CD4-positive, alpha-beta T cell (primary cell): ENCODE measurements at regions of chr12 and their contacts with region 1.

Region 1: GRCh38 chr12:57111031-57111734 is at the start of gene STAT6:
- DNase-seq: peak; percentile 69 to 96 (median 80)
- ATAC-seq: peak; percentile 64
- H3K4me3 ChIP-seq: peak within 1 kb of the TSS; percentile 95
- H3K4me3 Mint-ChIP-seq: peak within 1 kb of the TSS; percentile 96
- H3K27ac ChIP-seq: peak within 1 kb of the TSS; percentile 100
- H3K27ac Mint-ChIP-seq: peak within 1 kb of the TSS; percentile 94
- H3K4me1 ChIP-seq: peaks cover 57% of the 10 kb centered on the region
- H3K4me1 Mint-ChIP-seq: peaks cover 53% of the 10 kb centered on the region
- H3K27me3 ChIP-seq: no peaks in the 10 kb centered on the region
- H3K27me3 Mint-ChIP-seq: peaks cover 4% of the 10 kb centered on the region
- CTCF ChIP-seq: no peak
- total RNA-seq, gene STAT6: 133 to 144 TPM

Region 2: GRCh38 chr12:56636675-56637540 is 474.3 kb before region 1 on chr12:
- CTCF ChIA-PET with region 1: interaction called, 3 read pairs
- POLR2A ChIA-PET with region 1: interaction called, 15 read pairs
- intact Hi-C with region 1: no loop called
- DNase-seq: peak; percentile 87 to 98 (median 93)
- ATAC-seq: peak; percentile 72
- H3K4me3 ChIP-seq: peak overlapping the region; percentile 76
- H3K4me3 Mint-ChIP-seq: peak overlapping the region; percentile 94
- H3K27ac ChIP-seq: peak overlapping the region; percentile 56 to 84
- H3K27ac Mint-ChIP-seq: peak overlapping the region; percentile 98
- H3K4me1 ChIP-seq: peaks cover 56% of the 10 kb centered on the region
- H3K4me1 Mint-ChIP-seq: peaks cover 65% of the 10 kb centered on the region
- H3K27me3 ChIP-seq: no peaks in the 10 kb centered on the region
- H3K27me3 Mint-ChIP-seq: no peaks in the 10 kb centered on the region
- CTCF ChIP-seq: peak; percentile 72

Region 3: DNA sequence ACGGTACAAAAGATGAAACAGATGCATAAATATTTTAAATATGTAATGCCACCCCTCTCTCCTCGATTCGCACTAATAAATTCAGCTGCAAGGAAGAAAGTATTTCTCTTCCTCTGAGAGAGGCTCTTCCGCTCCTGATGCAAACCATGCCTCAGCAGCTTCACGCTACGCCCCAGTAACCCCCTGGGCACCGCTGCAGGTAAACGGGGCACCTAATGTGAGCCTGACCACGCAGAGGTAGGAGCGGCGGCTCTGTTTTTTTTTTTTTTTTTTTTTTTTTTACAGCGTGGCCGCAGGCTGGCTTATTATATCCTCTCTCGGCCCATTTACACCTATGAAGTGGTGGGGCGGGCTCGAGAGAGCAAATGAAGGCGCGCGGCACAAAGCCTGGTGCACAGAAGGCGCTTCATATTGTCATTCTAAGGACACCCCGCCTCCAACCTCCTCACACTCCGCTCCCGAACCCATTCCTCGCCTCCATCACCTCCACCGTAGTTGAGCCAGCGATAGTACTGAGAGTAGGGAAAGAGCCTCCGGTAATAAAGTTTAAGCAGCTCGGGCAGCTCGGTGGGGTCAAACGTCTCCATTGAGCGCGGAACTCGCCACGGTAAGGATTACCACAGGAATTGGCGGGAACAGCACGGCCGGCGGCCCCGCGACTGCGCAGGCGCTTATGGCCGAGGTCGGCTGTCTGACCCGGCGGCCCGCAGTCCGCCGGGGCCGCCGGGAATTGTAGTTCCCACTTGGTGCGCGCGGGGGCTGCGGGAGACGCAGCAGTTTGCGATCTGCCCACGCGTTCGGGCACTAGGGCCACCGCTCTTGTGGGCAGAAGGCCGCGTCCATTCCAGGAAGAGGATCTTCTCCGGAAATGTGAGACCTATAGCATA is 359.2 kb before region 1 on chr12 and contains the start of gene PRIM1:
- CTCF ChIA-PET with region 1: interaction called, 14 read pairs
- POLR2A ChIA-PET with region 1: interaction called, 10 read pairs
- intact Hi-C with region 1: loop called in 1 of 2 experiments (anchors 1 kb)
- DNase-seq: peak; percentile 66 to 91 (median 78)
- ATAC-seq: peak; percentile 80
- H3K4me3 ChIP-seq: peak within 1 kb of the TSS; percentile 96
- H3K4me3 Mint-ChIP-seq: peak within 1 kb of the TSS; percentile 98
- H3K27ac ChIP-seq: peak within 1 kb of the TSS; percentile 68 to 80
- H3K27ac Mint-ChIP-seq: peak within 1 kb of the TSS; percentile 95
- H3K4me1 ChIP-seq: peaks cover 10% of the 10 kb centered on the region
- H3K4me1 Mint-ChIP-seq: peaks cover 33% of the 10 kb centered on the region
- H3K27me3 ChIP-seq: no peaks in the 10 kb centered on the region
- H3K27me3 Mint-ChIP-seq: no peaks in the 10 kb centered on the region
- CTCF ChIP-seq: peak; percentile 41
- total RNA-seq, gene PRIM1: 5.3 to 6.1 TPM

Region 4: DNA sequence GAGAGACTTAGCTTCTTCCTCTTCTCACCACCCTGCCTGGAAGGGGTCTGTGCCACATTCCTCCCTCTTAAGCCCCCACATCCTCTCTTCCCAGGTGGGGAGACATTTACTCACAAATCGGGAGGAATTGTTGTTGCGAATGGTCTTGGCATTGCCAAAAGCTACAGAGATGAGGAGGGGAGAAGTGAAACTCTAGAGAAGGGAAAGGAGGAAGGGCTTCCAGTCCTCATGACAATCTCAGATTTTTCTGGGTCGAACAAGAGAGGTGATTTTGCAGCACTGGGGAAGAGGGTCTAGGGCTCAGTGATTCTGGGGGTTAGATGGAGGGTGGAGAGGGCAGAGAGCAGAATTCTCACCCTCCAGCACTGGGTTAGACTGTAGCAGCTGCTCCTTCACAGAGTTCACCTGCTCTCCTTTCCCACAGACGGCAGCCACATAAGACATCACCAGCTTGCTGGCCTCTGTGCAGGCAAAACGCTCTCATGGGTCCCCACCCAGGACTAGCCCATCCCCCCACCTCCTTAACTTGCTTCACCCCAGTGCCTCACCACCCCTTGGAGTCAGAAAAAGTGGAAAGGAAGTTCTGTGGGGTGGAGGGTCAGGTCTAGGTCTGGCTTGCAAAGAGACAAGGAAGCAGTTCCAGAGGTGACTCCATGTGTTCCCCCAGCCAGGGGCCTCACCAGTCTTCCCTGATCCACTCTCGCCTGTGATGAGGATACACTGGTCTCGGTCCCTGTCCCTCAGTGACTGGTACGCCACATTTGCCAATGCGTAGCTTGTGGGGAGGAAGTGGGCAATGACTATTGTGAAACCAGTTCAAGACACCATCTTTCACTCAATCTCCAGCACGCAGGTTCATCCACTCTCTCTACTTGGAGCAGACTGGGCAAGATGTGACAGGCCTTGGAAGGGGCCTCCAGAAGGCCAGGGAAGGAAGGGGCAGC is 64.0 kb before region 1 on chr12:
- CTCF ChIA-PET with region 1: interaction called, 5 read pairs
- POLR2A ChIA-PET with region 1: interaction called, 10 read pairs
- intact Hi-C with region 1: no loop called
- DNase-seq: peak in 6 of 14 experiments; percentile 13 to 69 (median 44)
- ATAC-seq: peak; percentile 54
- H3K4me3 ChIP-seq: no peak overlapping the region
- H3K4me3 Mint-ChIP-seq: peak overlapping the region; percentile 14
- H3K27ac ChIP-seq: no peak overlapping the region
- H3K27ac Mint-ChIP-seq: peak overlapping the region; percentile 47
- H3K4me1 ChIP-seq: peaks cover 20% of the 10 kb centered on the region
- H3K4me1 Mint-ChIP-seq: peaks cover 33% of the 10 kb centered on the region
- H3K27me3 ChIP-seq: no peaks in the 10 kb centered on the region
- H3K27me3 Mint-ChIP-seq: no peaks in the 10 kb centered on the region
- CTCF ChIP-seq: no peak

Region 5: GRCh38 chr12:57078519-57079404 is 32.4 kb before region 1 on chr12 and contains the start of gene NEMP1:
- CTCF ChIA-PET with region 1: interaction called, 141 read pairs
- POLR2A ChIA-PET with region 1: interaction called, 244 read pairs
- intact Hi-C with region 1: no loop called
- DNase-seq: peak; percentile 85 to 100 (median 92)
- ATAC-seq: peak; percentile 94
- H3K4me3 ChIP-seq: peak within 1 kb of the TSS; percentile 85
- H3K4me3 Mint-ChIP-seq: peak within 1 kb of the TSS; percentile 95
- H3K27ac ChIP-seq: peak within 1 kb of the TSS; percentile 73 to 74
- H3K27ac Mint-ChIP-seq: peak within 1 kb of the TSS; percentile 88
- H3K4me1 ChIP-seq: peaks cover 28% of the 10 kb centered on the region
- H3K4me1 Mint-ChIP-seq: peaks cover 23% of the 10 kb centered on the region
- H3K27me3 ChIP-seq: no peaks in the 10 kb centered on the region
- H3K27me3 Mint-ChIP-seq: no peaks in the 10 kb centered on the region
- CTCF ChIP-seq: no peak
- total RNA-seq, gene NEMP1: 7.2 to 9.9 TPM

Region 6: GRCh38 chr12:57157588-57158173 is 46.5 kb after region 1 on chr12:
- CTCF ChIA-PET with region 1: no interaction called
- POLR2A ChIA-PET with region 1: no interaction called
- intact Hi-C with region 1: no loop called
- DNase-seq: peak in 1 of 14 experiments; percentile 29
- ATAC-seq: no peak
- H3K4me3 ChIP-seq: no peak overlapping the region
- H3K4me3 Mint-ChIP-seq: no peak overlapping the region
- H3K27ac ChIP-seq: no peak overlapping the region
- H3K27ac Mint-ChIP-seq: no peak overlapping the region
- H3K4me1 ChIP-seq: peaks cover 10% of the 10 kb centered on the region
- H3K4me1 Mint-ChIP-seq: no peaks in the 10 kb centered on the region
- H3K27me3 ChIP-seq: no peaks in the 10 kb centered on the region
- H3K27me3 Mint-ChIP-seq: no peaks in the 10 kb centered on the region
- CTCF ChIP-seq: no peak

Region 7: GRCh38 chr12:57182921-57183790 is 72.0 kb after region 1 on chr12:
- CTCF ChIA-PET with region 1: interaction called, 13 read pairs
- POLR2A ChIA-PET with region 1: interaction called, 4 read pairs
- intact Hi-C with region 1: no loop called
- DNase-seq: peak; percentile 66 to 88 (median 79)
- ATAC-seq: peak; percentile 100
- H3K4me3 ChIP-seq: no peak overlapping the region
- H3K4me3 Mint-ChIP-seq: no peak overlapping the region
- H3K27ac ChIP-seq: no peak overlapping the region
- H3K27ac Mint-ChIP-seq: no peak overlapping the region
- H3K4me1 ChIP-seq: peaks cover 6% of the 10 kb centered on the region
- H3K4me1 Mint-ChIP-seq: no peaks in the 10 kb centered on the region
- H3K27me3 ChIP-seq: no peaks in the 10 kb centered on the region
- H3K27me3 Mint-ChIP-seq: no peaks in the 10 kb centered on the region
- CTCF ChIP-seq: peak; percentile 80